Panc1 (cell line): ENCODE measurements at regions of chr4 and their contacts with region 1.

Region 1: GRCh38 chr4:41214136-41214824 is at the start of gene APBB2:
- DNase-seq: peak; percentile 84
- ATAC-seq: peak; percentile 87
- H3K4me3 ChIP-seq: peak within 1 kb of the TSS; percentile 84 to 91
- H3K27ac ChIP-seq: peak within 1 kb of the TSS; percentile 93
- H3K4me1 ChIP-seq: peaks cover 29% of the 10 kb centered on the region
- H3K27me3 ChIP-seq: no peaks in the 10 kb centered on the region
- CTCF ChIP-seq: peak; percentile 93
- total RNA-seq, gene APBB2: 27.1 TPM

Region 2: DNA sequence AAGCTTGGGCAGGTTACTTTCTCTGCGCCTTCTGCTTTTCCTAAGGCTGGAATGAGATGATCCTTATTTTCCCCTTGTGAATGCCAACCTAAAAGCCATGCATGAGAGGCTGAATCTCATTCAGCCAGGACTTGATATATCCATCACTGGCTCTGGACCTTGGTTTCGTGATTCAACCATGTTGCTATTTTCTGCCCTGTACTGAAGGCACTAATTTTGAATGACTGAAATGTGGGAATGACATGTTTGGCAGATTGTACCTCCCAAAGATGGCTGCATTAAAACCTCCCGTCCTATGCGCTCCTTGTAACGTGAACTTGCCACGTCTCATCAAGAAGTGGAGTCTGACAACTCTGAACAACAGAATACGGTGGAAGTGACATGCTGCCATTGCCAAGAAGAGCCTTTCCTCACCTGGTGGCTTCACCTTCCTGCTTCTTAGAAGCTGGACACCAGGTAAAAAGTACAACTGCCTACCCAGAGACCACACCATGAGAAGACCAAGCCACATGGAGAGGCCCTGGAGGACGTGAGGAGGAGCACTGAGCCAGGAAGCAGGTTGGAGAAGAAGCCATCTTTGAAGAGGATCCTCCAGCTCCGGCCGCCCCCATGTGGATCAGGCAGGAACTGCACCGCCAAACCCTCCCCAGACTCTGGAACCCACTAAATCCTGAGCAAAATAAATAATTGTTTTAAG is 290.0 kb before region 1 on chr4:
- CTCF ChIA-PET with region 1: interaction called, 3 read pairs
- POLR2A ChIA-PET with region 1: interaction called, 3 read pairs
- in situ Hi-C with region 1: no loop called
- intact Hi-C with region 1: loop called (anchors 5 kb)
- DNase-seq: peak; percentile 27
- ATAC-seq: peak; percentile 73; the same call in 1 of the 2 replicates
- H3K4me3 ChIP-seq: no peak overlapping the region
- H3K27ac ChIP-seq: no peak overlapping the region
- H3K4me1 ChIP-seq: no peaks in the 10 kb centered on the region
- H3K27me3 ChIP-seq: no peaks in the 10 kb centered on the region
- CTCF ChIP-seq: peak; percentile 88

Region 3: GRCh38 chr4:40976343-40976742 is 237.9 kb before region 1 on chr4:
- CTCF ChIA-PET with region 1: interaction called, 4 read pairs
- POLR2A ChIA-PET with region 1: no interaction called
- in situ Hi-C with region 1: no loop called
- intact Hi-C with region 1: loop called (anchors 2 kb)
- DNase-seq: no peak
- ATAC-seq: no peak
- H3K4me3 ChIP-seq: no peak overlapping the region
- H3K27ac ChIP-seq: no peak overlapping the region
- H3K4me1 ChIP-seq: no peaks in the 10 kb centered on the region; the same call in 1 of the 2 replicates
- H3K27me3 ChIP-seq: no peaks in the 10 kb centered on the region
- CTCF ChIP-seq: peak; percentile 60; the same call in 1 of the 2 replicates

Region 4: DNA sequence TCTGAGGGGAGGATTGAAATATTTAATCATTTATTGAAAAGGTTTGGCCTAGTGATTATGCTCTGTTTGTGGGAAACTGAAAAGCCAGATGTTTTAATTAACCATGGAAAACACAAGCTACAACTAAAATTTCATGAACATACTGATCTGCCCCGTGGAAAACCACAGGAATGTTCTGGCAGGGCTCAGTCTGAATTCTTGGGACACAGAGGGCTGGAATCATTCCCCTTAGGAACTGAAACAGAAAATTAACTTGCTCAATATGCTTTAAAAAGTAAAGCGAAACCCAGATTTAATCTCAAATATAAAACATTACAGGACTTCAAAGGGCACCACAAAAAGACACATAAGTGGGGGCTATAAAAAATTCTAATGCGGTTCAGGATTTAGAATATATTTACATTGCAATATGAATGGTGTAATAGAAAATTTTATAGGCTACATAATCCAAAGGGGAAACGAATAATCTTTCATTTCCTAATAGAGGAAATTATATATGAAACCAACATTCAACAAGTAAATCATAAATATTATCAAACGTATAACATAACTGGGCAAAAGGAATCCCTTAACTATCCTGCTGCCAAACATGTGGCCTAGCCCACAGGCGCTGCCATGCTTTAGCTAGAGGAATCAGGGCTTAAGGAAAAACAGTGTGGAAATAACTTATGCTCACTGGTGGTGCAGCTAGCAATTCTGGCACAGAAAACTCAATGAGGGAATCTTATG is 70.8 kb before region 1 on chr4:
- CTCF ChIA-PET with region 1: interaction called, 11 read pairs
- POLR2A ChIA-PET with region 1: no interaction called
- in situ Hi-C with region 1: no loop called
- intact Hi-C with region 1: loop called (anchors 10 kb)
- DNase-seq: no peak
- ATAC-seq: peak; percentile 56
- H3K4me3 ChIP-seq: no peak overlapping the region
- H3K27ac ChIP-seq: peak overlapping the region; percentile 80
- H3K4me1 ChIP-seq: peaks cover 41% of the 10 kb centered on the region
- H3K27me3 ChIP-seq: no peaks in the 10 kb centered on the region
- CTCF ChIP-seq: no peak